ENCODE measurements at regions of chr4 and their contacts with region 1.

Region 1: GRCh38 chr4:99816545-99817308 is at the start of gene DAPP1:
- DNase-seq: peak; percentile 64
- ATAC-seq: peak; percentile 92
- H3K4me3 Mint-ChIP-seq: peak within 1 kb of the TSS; percentile 89
- H3K27ac Mint-ChIP-seq: peak within 1 kb of the TSS; percentile 88
- H3K4me1 Mint-ChIP-seq: peaks cover 75% of the 10 kb centered on the region
- H3K27me3 Mint-ChIP-seq: no peaks in the 10 kb centered on the region
- CTCF ChIP-seq: no peak
- total RNA-seq, gene DAPP1: 137 and 144 TPM in 2 replicates

Region 2: DNA sequence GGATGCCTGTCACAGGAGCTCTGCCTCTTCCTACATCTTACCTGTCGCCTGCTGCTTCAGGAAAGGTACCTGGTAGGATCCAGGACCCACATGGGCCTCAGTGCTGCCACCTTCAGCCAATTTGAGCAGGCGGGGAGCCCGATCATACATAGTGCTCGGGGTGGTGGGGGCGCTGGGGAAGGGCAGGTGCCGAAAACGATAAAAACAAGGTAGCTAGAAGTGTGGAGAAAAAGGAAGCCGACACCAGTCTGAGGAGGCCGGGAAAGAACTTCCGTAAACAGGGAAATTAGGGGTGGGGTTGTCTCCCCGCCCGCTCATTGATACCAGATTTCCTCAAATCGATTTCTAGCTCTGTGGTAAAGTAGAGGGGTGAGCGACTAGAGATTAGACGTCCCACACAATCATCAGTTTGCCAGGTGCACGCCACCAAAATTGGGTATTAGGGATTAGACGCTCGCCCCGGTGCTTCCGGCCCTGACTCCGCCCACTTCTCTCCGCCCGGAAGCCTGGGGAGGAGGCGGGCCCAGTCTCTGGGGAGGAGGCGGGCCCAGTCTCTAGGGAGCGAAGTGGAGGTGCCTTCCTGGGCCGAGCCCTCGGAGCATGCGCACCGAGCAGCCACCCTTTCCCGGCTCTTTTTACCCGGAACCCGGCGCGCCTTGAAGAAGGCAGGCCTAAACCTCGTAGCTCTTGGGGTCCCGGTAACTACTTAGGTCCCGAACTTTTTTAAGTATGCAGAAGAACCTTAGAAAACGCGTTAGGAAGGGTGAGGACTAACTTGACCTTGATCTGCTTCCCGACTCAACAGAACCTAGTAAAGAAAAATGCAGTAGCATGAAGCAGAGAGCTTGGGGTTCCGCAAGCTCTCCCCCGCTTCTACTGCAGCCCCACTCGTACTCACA is 1673.5 kb before region 1 on chr4 and contains the start of gene STPG2:
- CTCF ChIA-PET with region 1: no interaction called
- POLR2A ChIA-PET with region 1: interaction called, 3 read pairs
- intact Hi-C with region 1: loop called (anchors 1 kb)
- DNase-seq: peak; percentile 97
- ATAC-seq: peak; percentile 99
- H3K4me3 Mint-ChIP-seq: peak within 1 kb of the TSS; percentile 92
- H3K27ac Mint-ChIP-seq: peak within 1 kb of the TSS; percentile 97
- H3K4me1 Mint-ChIP-seq: peaks cover 25% of the 10 kb centered on the region
- H3K27me3 Mint-ChIP-seq: no peaks in the 10 kb centered on the region
- CTCF ChIP-seq: no peak
- total RNA-seq, gene STPG2: 0.37 and 0.69 TPM in 2 replicates

Region 3: DNA sequence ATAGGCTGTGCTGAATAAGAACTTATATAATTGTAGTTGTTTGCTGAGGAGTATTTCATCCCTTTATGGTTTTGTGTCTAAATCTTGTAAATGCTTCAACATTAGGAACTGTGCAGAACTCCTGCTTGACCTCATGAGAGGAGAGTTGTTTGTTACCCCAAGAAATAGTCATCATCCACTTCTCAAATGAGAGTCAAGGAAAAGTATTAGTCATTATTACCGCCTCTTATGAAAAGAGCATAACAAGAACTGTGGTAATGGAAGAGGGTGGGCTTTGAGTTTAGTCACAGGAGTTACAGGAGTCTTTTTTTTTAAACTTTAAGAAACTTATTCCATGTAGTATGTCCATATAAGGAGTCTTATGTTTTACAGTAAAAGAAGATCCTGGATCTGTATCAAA is 1422.6 kb before region 1 on chr4:
- CTCF ChIA-PET with region 1: no interaction called
- POLR2A ChIA-PET with region 1: no interaction called
- intact Hi-C with region 1: no loop called
- DNase-seq: no peak
- ATAC-seq: no peak
- H3K4me3 Mint-ChIP-seq: no peak overlapping the region
- H3K27ac Mint-ChIP-seq: no peak overlapping the region
- H3K4me1 Mint-ChIP-seq: no peaks in the 10 kb centered on the region
- H3K27me3 Mint-ChIP-seq: no peaks in the 10 kb centered on the region
- CTCF ChIP-seq: no peak

Region 4: GRCh38 chr4:99088481-99089365 is 728.0 kb before region 1 on chr4 and contains the start of gene ADH5:
- CTCF ChIA-PET with region 1: no interaction called
- POLR2A ChIA-PET with region 1: interaction called, 3 read pairs
- intact Hi-C with region 1: loop called (anchors 2 kb)
- DNase-seq: peak; percentile 77
- ATAC-seq: peak; percentile 95
- H3K4me3 Mint-ChIP-seq: peak within 1 kb of the TSS; percentile 99
- H3K27ac Mint-ChIP-seq: peak within 1 kb of the TSS; percentile 99
- H3K4me1 Mint-ChIP-seq: peaks cover 41% of the 10 kb centered on the region
- H3K27me3 Mint-ChIP-seq: no peaks in the 10 kb centered on the region
- CTCF ChIP-seq: no peak
- total RNA-seq, gene ADH5: 70.1 and 74.2 TPM in 2 replicates

Region 5: GRCh38 chr4:99847362-99847976 is 30.7 kb after region 1 on chr4:
- CTCF ChIA-PET with region 1: interaction called, 15 read pairs
- POLR2A ChIA-PET with region 1: interaction called, 75 read pairs
- intact Hi-C with region 1: loop called (anchors 1 kb)
- DNase-seq: no peak
- ATAC-seq: peak; percentile 72
- H3K4me3 Mint-ChIP-seq: peak overlapping the region; percentile 70
- H3K27ac Mint-ChIP-seq: peak overlapping the region; percentile 91
- H3K4me1 Mint-ChIP-seq: peaks cover 77% of the 10 kb centered on the region
- H3K27me3 Mint-ChIP-seq: no peaks in the 10 kb centered on the region
- CTCF ChIP-seq: no peak

Region 6: GRCh38 chr4:99894161-99894997 is 77.7 kb after region 1 on chr4 and contains the start of gene LAMTOR3:
- CTCF ChIA-PET with region 1: interaction called, 7 read pairs
- POLR2A ChIA-PET with region 1: interaction called, 23 read pairs
- intact Hi-C with region 1: loop called (anchors 1 kb)
- DNase-seq: peak; percentile 78
- ATAC-seq: peak; percentile 98
- H3K4me3 Mint-ChIP-seq: peak within 1 kb of the TSS; percentile 94
- H3K27ac Mint-ChIP-seq: peak within 1 kb of the TSS; percentile 90
- H3K4me1 Mint-ChIP-seq: peaks cover 26% of the 10 kb centered on the region
- H3K27me3 Mint-ChIP-seq: no peaks in the 10 kb centered on the region
- CTCF ChIP-seq: no peak
- total RNA-seq, gene LAMTOR3: 21.9 and 23.8 TPM in 2 replicates